Aorta (tissue), 5 donors: ENCODE measurements at regions of chr5 and their contacts with region 1.

Region 1: DNA sequence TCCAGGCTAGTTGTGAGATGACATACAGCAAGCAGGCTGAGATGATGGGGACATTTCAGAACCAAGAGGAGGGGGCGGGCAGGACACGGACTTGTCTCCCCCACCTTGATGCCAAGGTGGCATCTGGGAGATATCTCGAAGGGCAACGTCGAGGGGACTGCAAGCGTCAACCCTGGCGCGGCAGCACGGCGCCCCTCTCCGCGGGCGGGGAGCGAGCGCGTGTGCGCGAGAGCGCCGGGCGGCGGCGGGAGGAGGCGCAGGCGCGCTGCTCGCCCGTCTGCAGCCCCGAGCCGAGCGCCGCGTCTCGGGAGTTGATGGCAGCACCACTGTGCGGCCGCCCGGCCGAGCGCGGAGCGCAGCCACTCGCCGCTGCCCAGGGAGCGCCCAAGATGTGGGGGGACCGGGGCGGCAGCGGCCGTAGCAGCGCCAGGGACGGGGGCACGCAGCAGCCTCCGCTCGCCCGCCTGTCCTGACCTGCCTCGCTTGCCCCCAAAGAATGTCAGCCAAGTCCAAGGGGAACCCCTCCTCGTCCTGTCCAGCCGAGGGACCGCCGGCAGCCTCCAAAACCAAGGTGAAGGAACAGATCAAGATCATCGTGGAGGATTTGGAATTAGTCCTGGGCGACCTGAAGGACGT is at the start of gene PRR16:
- DNase-seq: peak; percentile 69 to 89
- ATAC-seq: peak; percentile 89
- H3K4me3 ChIP-seq: peak within 1 kb of the TSS; percentile 78 to 88
- H3K27ac ChIP-seq: peak within 1 kb of the TSS; percentile 0 to 84
- H3K4me1 ChIP-seq: no peaks in the 10 kb centered on the region
- H3K27me3 ChIP-seq: no peaks in the 10 kb centered on the region
- total RNA-seq, gene PRR16: 10.5 to 14.2 TPM

Region 2: GRCh38 chr5:119470851-119471451 is 993.2 kb before region 1 on chr5:
- intact Hi-C with region 1: loop called (anchors 10 kb)
- DNase-seq: no peak
- ATAC-seq: no peak
- H3K4me3 ChIP-seq: no peak overlapping the region
- H3K27ac ChIP-seq: no peak overlapping the region
- H3K4me1 ChIP-seq: no peaks in the 10 kb centered on the region
- H3K27me3 ChIP-seq: no peaks in the 10 kb centered on the region

Region 3: DNA sequence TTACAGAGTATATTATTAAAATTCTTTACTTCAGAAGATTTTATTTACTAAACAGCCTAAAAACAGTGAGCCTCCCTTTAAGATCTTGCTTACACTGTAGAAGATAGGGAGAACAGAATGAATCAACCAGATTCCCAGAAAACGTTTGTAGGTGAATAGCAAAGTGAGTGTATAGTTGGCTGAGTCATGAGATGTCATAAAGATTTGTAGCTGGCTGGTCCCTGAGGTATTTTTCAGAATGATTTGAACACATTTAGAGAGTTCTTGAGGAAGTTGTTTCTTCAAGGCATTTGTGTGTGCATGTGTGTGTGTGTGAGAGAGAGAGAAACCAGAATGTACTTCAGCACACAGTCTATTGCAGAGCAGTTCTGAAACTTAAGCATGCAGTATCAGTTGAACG is 159.4 kb before region 1 on chr5:
- intact Hi-C with region 1: loop called in 1 of 2 experiments (anchors 5 kb)
- DNase-seq: no peak
- ATAC-seq: no peak
- H3K4me3 ChIP-seq: no peak overlapping the region
- H3K27ac ChIP-seq: no peak overlapping the region
- H3K4me1 ChIP-seq: peaks cover 0 to 4% of the 10 kb centered on the region in 2 donors
- H3K27me3 ChIP-seq: no peaks in the 10 kb centered on the region

Region 4: GRCh38 chr5:120550358-120550757 is 86.2 kb after region 1 on chr5:
- intact Hi-C with region 1: no loop called
- DNase-seq: no peak
- ATAC-seq: no peak
- H3K4me3 ChIP-seq: no peak overlapping the region
- H3K27ac ChIP-seq: no peak overlapping the region
- H3K4me1 ChIP-seq: peaks cover 0 to 3% of the 10 kb centered on the region in 2 donors
- H3K27me3 ChIP-seq: no peaks in the 10 kb centered on the region

Region 5: GRCh38 chr5:120624021-120624563 is 160.0 kb after region 1 on chr5:
- intact Hi-C with region 1: no loop called
- DNase-seq: no peak
- ATAC-seq: no peak
- H3K4me3 ChIP-seq: no peak overlapping the region
- H3K27ac ChIP-seq: no peak overlapping the region
- H3K4me1 ChIP-seq: no peaks in the 10 kb centered on the region
- H3K27me3 ChIP-seq: no peaks in the 10 kb centered on the region